Activated CD4-positive, alpha-beta T cell treated with anti-CD3 and anti-CD28 coated beads for 36 hours (primary cell): ENCODE measurements at regions of chr16 and their contacts with region 1.

Region 1: DNA sequence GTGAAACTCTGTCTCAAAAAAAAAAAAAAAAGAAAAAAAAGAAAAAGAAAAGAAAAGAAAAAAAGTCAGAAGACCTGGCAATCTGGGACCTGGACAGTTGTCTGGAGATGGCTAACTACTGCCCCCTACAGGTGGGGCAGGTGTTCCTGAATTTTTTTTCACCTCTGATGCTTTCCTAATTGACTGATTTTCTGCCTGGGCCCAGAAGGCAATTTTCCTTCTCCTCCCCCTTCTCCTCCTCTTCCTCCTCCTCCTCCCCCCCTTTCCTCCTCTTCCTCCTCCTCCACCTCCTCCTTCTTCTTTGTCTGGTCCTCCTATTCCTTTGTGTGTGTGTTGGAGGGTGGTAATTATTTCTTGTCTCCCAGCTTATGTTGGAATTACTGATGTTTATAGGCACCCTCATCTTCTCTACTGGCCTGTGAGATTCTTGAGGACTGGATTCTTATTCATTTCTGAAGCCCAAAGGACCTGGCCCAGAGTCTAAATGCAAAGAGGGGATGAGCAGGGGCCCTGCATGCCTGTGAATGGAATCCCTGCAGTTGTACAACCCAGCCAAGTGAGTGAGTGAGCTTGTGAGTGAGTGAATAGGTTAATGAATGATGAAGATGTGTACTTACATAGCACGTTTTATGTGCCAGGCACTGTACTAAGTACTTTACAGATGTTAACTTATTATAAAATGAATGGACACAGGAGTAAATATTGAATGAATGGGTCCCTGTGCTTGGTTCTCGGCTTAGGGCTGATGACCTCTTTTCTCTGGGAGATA is 26.9 kb downstream of the IRX5 start:
- DNase-seq: peak; percentile 64
- ATAC-seq: no peak
- H3K4me3 Mint-ChIP-seq: no peak overlapping the region
- H3K27ac Mint-ChIP-seq: no peak overlapping the region
- H3K4me1 Mint-ChIP-seq: peaks cover under 1% of the 10 kb centered on the region
- H3K27me3 Mint-ChIP-seq: peaks cover 2% of the 10 kb centered on the region

Region 2: GRCh38 chr16:54633943-54634362 is 323.6 kb before region 1 on chr16:
- CTCF ChIA-PET with region 1: no interaction called
- POLR2A ChIA-PET with region 1: no interaction called
- intact Hi-C with region 1: loop called in 1 of 2 experiments (anchors 5 kb)
- DNase-seq: peak; percentile 13
- ATAC-seq: no peak
- H3K4me3 Mint-ChIP-seq: no peak overlapping the region
- H3K27ac Mint-ChIP-seq: no peak overlapping the region
- H3K4me1 Mint-ChIP-seq: no peaks in the 10 kb centered on the region
- H3K27me3 Mint-ChIP-seq: peaks cover 2% of the 10 kb centered on the region